ENCODE measurements at regions of chr16 and their contacts with region 1.

Region 1: GRCh38 chr16:55842369-55843104 is 9.6 kb upstream of the CES1 start:
- DNase-seq: no peak
- H3K4me3 ChIP-seq: no peak overlapping the region
- H3K27ac ChIP-seq: no peak overlapping the region
- H3K4me1 ChIP-seq: no peaks in the 10 kb centered on the region
- H3K27me3 ChIP-seq: peaks cover 1% of the 10 kb centered on the region
- CTCF ChIP-seq: peak; percentile 70 to 76 (median 75)
- EP300 ChIP-seq: no peak
- POLR2A ChIP-seq: no peak

Region 2: DNA sequence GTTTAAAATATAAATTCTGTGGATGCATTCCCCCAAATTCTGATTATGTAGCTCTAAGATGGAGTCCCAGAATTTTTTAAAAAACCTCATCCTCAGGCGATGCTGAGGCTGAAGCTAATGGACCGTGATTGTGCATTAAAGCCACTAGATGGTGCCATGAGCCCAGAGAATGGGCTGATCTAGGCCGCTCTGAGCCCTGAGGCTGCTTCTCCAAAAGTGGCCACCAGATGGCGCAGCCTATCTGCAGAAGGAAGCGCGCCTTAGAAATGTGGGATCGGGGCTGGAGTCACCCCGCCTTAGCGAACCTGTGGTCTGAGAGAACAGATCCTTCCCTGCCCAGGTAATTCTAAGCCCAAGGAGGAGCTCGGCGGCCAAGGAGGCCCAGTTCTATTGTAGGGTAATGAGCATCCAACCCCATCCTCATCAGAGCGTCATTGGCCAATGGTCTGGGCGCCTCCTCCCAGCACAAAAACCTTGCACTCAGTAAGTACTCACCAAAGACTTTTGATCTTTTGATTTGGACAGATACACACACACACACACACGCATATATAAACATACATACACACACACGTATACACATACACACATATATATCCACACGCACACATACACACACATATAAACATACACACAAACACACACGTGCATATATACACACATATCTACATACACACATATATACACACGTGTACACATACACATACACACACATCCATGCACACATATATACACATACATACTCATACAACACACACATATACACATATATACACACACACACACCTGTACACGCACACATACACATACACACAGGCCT is 377.2 kb before region 1 on chr16:
- in situ Hi-C with region 1: loop called (anchors 10 to 25 kb)
- intact Hi-C with region 1: loop called (anchors 1 kb)
- DNase-seq: peak; percentile 91
- H3K4me3 ChIP-seq: no peak overlapping the region
- H3K27ac ChIP-seq: no peak overlapping the region
- H3K4me1 ChIP-seq: peaks cover 0 to under 1% (median 0%) of the 10 kb centered on the region in 4 donors
- H3K27me3 ChIP-seq: no peaks in the 10 kb centered on the region
- CTCF ChIP-seq: peak; percentile 99 to 100 (median 100)
- EP300 ChIP-seq: no peak
- POLR2A ChIP-seq: no peak

Region 3: GRCh38 chr16:55706739-55707384 is 135.7 kb before region 1 on chr16:
- in situ Hi-C with region 1: loop called in 3 of 4 experiments (anchors 5 to 10 kb)
- intact Hi-C with region 1: loop called (anchors 5 kb)
- DNase-seq: no peak
- H3K4me3 ChIP-seq: no peak overlapping the region
- H3K27ac ChIP-seq: no peak overlapping the region
- H3K4me1 ChIP-seq: no peaks in the 10 kb centered on the region
- H3K27me3 ChIP-seq: peaks cover 6% of the 10 kb centered on the region
- CTCF ChIP-seq: no peak
- EP300 ChIP-seq: no peak
- POLR2A ChIP-seq: no peak

Region 4: DNA sequence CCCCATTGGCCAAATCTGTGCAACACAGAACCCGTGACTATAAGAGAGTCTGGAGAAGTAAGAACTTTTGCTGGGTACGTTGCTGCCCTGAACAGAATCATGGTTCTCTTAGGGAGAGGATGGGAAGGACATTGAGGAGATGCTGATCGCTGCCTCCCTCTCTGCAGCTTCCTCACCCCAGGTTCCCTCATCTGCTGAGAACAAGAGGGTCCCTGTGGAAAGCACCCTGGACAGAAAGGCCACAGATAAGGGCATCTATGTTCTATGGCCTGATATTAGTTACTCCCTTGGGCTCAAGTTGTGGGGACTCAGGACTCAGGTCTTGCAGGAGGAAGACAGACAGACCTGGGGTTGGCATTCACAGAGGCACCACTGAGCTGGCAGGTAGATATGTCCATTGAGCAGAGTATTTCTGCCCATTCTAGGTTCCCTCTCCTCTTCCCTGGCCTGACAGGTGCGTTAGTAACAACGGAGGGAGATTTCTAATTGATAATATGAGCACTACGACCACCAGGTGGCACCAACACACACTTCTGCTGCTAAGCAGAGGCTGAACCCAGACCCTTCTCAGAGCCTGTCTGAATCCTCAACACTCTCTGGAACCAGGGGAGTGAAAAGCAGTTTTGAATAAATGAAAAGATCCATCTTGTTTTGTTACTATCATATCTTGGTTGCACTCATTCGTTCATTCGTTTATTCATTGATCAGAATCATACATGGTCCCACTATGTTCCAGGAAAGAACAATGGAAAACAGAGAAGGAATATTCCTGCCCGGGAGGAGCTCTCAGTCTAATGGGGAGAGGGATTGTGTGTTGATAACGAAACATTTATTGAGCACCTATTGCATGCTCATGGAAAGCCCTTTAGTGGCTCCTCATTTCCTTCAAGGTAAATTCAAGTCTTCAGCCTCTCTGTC is 130.3 kb before region 1 on chr16:
- in situ Hi-C with region 1: loop called (anchors 5 to 10 kb)
- intact Hi-C with region 1: loop called (anchors 5 kb)
- DNase-seq: peak; percentile 40
- H3K4me3 ChIP-seq: no peak overlapping the region
- H3K27ac ChIP-seq: no peak overlapping the region
- H3K4me1 ChIP-seq: no peaks in the 10 kb centered on the region
- H3K27me3 ChIP-seq: peaks cover 7% of the 10 kb centered on the region
- CTCF ChIP-seq: peak; percentile 51 to 64 (median 55)
- EP300 ChIP-seq: no peak
- POLR2A ChIP-seq: no peak

Region 5: GRCh38 chr16:55717326-55717725 is 125.2 kb before region 1 on chr16:
- in situ Hi-C with region 1: loop called in 3 of 4 experiments (anchors 5 to 10 kb)
- intact Hi-C with region 1: loop called (anchors 5 kb)
- DNase-seq: no peak
- H3K4me3 ChIP-seq: no peak overlapping the region
- H3K27ac ChIP-seq: no peak overlapping the region
- H3K4me1 ChIP-seq: no peaks in the 10 kb centered on the region
- H3K27me3 ChIP-seq: peaks cover 3% of the 10 kb centered on the region
- CTCF ChIP-seq: no peak
- EP300 ChIP-seq: no peak
- POLR2A ChIP-seq: no peak

Region 6: DNA sequence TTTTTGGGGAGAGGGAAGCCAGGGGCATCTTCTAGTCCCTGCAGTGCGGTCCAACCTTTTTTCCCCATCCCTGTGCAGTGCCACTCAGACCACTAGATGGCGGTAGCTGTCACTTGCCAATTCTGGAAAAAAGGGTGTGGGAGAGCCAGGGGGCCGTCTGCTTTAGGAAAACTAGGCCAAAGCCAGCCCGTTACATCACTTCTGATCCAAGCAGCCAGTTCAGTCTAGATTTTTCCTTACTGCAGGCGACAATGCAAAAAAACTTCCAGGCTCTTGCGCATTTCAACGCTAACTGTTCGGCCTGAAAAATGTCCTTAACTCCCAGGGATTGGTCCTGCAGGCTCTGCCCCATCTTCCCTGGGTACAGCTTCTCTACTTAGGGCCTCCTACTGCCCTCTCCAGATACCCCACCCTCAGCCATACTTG is 101.9 kb after region 1 on chr16:
- in situ Hi-C with region 1: loop called in 1 of 4 experiments (anchors 25 kb)
- intact Hi-C with region 1: no loop called
- DNase-seq: peak; percentile 61
- H3K4me3 ChIP-seq: no peak overlapping the region
- H3K27ac ChIP-seq: peak overlapping the region in 3 of 4 donors; percentile 40 to 50 (median 41)
- H3K4me1 ChIP-seq: peaks cover 0 to 2% (median 0%) of the 10 kb centered on the region in 4 donors
- H3K27me3 ChIP-seq: no peaks in the 10 kb centered on the region
- CTCF ChIP-seq: peak; percentile 73 to 93 (median 91)
- EP300 ChIP-seq: no peak
- POLR2A ChIP-seq: no peak

Region 7: DNA sequence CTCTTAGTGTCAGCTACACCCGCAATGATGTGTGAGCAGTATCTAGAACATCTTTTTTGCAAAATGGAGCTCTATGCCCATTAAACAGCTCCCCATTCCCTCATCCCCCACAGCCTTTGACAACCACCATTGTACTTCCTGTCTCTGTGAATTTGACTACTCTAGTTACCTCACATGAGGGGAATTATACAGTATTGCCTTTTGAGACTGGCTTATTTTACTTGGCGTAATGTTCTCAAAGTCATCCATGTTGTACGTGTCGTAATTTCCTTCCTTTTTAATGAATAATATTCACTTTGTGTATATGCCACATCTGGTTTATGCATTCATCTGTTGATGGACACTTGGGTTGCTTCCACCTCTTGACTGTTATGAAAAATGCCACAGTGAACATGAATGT is 1492.8 kb after region 1 on chr16:
- in situ Hi-C with region 1: no loop called
- intact Hi-C with region 1: no loop called
- DNase-seq: no peak
- H3K4me3 ChIP-seq: no peak overlapping the region
- H3K27ac ChIP-seq: no peak overlapping the region
- H3K4me1 ChIP-seq: peaks cover 0 to under 1% (median 0%) of the 10 kb centered on the region in 4 donors
- H3K27me3 ChIP-seq: no peaks in the 10 kb centered on the region
- CTCF ChIP-seq: no peak
- EP300 ChIP-seq: no peak
- POLR2A ChIP-seq: no peak